ENCODE measurements at regions of chr1 and their contacts with region 1.

Region 1: DNA sequence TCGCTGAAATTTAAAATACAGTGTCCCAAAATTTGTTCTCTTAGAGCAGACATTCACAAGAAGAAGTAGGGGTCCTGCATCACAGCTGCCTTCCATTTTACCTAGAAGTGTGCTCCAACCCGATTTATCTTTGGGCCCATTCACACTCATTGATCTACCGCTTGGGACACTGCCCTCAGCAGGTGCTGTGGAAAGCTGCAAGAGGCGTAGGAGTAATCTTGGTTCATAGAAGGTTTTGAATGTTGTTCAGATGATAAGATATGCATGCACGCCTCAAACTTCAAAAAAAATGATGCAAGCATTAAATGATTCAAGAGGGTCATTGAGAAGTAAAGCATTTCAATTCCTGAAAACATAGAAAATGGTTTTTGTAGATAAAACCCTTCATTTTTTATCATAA is 18.6 kb upstream of the C1orf105 start:
- DNase-seq: no peak
- H3K4me3 ChIP-seq: no peak overlapping the region
- H3K27ac ChIP-seq: no peak overlapping the region
- H3K4me1 ChIP-seq: peaks cover 0 to 38% (median 20%) of the 10 kb centered on the region in 4 donors
- H3K27me3 ChIP-seq: no peaks in the 10 kb centered on the region
- CTCF ChIP-seq: peak in 1 of 7 experiments; percentile 7
- EP300 ChIP-seq: no peak
- POLR2A ChIP-seq: no peak

Region 2: DNA sequence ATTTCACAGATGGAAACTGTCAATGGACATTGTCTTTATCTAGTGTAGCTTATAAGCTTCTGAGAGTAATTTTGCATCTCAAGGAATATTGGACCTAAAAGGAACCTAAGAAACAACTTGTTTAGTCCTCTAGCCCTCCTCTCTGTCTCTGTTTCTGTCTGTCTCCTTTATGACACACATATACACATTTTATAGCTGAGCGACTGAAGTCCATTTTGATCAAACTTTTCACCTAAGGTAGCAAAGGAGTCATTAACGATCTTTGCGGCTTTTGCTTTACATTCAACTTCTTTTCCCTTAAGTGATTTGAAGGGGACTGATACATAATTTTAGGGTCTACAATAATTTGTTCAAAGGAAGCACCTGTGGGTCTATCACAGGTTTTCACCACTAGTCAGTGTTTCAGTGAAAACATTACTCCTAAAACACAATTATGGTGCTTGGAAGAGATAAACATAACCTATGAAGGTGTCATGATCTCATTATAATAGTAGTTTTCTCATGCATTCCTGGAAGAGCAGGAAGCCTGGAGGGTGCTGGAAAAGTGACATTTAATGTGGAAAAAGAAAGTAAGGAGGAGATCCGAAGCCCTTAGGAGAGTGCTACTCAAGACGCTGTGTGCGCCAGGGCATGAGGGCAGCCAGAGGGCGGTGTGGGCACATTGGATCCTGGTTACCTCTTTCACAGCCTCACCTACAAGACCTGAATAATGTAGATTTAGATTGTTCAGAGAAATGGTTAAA is 312.0 kb before region 1 on chr1:
- intact Hi-C with region 1: loop called (anchors 10 kb)
- DNase-seq: peak; percentile 78 to 86
- H3K4me3 ChIP-seq: no peak overlapping the region
- H3K27ac ChIP-seq: no peak overlapping the region
- H3K4me1 ChIP-seq: no peaks in the 10 kb centered on the region
- H3K27me3 ChIP-seq: no peaks in the 10 kb centered on the region
- CTCF ChIP-seq: peak in 5 of 7 experiments; percentile 52 to 86 (median 76)
- EP300 ChIP-seq: no peak
- POLR2A ChIP-seq: no peak

Region 3: GRCh38 chr1:172255223-172255560 is 146.7 kb before region 1 on chr1:
- intact Hi-C with region 1: no loop called
- DNase-seq: no peak
- H3K4me3 ChIP-seq: no peak overlapping the region
- H3K27ac ChIP-seq: no peak overlapping the region
- H3K4me1 ChIP-seq: no peaks in the 10 kb centered on the region
- H3K27me3 ChIP-seq: no peaks in the 10 kb centered on the region
- CTCF ChIP-seq: no peak
- EP300 ChIP-seq: no peak
- POLR2A ChIP-seq: no peak

Region 4: DNA sequence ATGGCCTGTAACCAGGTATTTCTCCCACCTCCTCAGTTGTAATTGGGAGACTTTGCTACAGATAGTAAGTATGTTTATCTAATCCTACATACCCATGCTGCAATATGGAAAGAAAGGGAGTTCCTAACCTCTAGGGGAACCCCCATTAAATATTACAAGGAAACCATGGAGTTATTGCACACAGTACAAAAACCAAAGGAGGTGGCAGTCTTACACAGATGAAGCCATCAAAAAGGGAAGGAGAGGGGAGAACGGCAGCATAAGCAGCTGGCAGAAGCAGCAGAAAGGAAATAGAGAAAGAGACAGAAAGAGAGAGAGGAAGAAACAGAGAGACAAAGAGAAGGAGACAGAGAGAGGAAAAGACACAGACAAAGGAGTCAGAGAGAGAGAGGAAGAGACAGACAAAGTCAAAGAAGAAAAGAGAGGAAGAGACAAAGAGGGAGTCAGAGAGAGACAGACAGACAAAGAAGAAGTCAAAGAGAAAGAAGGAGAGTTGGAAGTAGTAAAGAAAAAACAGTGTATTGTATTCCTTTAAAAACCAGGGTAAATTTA is 400.0 kb after region 1 on chr1:
- intact Hi-C with region 1: no loop called
- DNase-seq: no peak
- H3K4me3 ChIP-seq: no peak overlapping the region
- H3K27ac ChIP-seq: no peak overlapping the region
- H3K4me1 ChIP-seq: no peaks in the 10 kb centered on the region
- H3K27me3 ChIP-seq: no peaks in the 10 kb centered on the region
- CTCF ChIP-seq: no peak
- EP300 ChIP-seq: no peak
- POLR2A ChIP-seq: no peak

Measured in stomach (tissue), 19 donors.